ENCODE measurements at regions of chr13 and their contacts with region 1.

Region 1: GRCh38 chr13:106536244-106537034 is 977 bp upstream of the EFNB2 start:
- DNase-seq: peak; percentile 93
- ATAC-seq: peak; percentile 71 to 74

Region 2: GRCh38 chr13:104571161-104571892 is 1965.1 kb before region 1 on chr13:
- intact Hi-C with region 1: loop called (anchors 5 to 10 kb)
- DNase-seq: peak; percentile 56
- ATAC-seq: peak; percentile 72 to 94

Region 3: DNA sequence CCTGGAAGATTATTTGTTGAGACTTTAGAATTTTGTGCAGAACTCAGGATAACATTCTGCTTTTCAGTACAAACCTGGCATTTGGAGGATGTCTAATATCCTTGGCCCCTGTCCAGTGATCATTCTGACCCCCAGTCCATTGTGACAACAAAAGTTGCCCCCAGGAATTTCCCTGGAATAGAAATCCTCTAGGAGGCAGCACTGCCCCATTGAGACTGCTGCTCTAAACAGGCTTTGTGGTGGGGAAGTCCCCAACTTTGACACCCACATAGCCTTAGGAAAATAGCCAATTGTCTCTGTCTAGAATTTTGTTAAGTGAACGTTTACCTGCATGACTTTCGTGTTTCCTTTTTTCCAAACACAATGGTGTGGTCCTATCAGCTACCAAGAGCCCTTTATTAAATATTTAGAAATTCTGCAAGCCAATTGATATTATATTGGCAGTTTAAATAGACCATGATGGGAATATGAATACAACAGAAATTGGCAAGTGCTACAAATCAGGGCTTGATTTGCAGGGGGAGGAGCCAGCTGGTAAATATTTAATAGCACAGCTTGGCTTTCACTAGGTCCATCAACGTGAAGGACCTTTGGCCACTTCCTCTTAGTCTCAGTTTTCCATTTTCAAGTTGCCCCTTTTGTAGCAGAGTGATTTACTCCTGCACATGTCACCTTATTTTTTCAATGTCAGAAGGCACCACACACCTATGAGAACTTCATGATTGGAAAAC is 452.7 kb before region 1 on chr13:
- intact Hi-C with region 1: loop called in 1 of 2 experiments (anchors 10 kb)
- DNase-seq: no peak
- ATAC-seq: peak in 1 of 2 donors; percentile 32

Region 4: GRCh38 chr13:106475852-106476251 is 60.6 kb before region 1 on chr13:
- intact Hi-C with region 1: no loop called
- DNase-seq: no peak
- ATAC-seq: no peak

Region 5: GRCh38 chr13:106566641-106567473 is 30.4 kb after region 1 on chr13:
- intact Hi-C with region 1: no loop called
- DNase-seq: peak; percentile 81
- ATAC-seq: peak; percentile 72 to 78

Region 6: GRCh38 chr13:106619688-106620555 is 83.5 kb after region 1 on chr13:
- intact Hi-C with region 1: loop called in 1 of 2 experiments (anchors 2 kb)
- DNase-seq: peak; percentile 43
- ATAC-seq: peak; percentile 94 to 96

Region 7: DNA sequence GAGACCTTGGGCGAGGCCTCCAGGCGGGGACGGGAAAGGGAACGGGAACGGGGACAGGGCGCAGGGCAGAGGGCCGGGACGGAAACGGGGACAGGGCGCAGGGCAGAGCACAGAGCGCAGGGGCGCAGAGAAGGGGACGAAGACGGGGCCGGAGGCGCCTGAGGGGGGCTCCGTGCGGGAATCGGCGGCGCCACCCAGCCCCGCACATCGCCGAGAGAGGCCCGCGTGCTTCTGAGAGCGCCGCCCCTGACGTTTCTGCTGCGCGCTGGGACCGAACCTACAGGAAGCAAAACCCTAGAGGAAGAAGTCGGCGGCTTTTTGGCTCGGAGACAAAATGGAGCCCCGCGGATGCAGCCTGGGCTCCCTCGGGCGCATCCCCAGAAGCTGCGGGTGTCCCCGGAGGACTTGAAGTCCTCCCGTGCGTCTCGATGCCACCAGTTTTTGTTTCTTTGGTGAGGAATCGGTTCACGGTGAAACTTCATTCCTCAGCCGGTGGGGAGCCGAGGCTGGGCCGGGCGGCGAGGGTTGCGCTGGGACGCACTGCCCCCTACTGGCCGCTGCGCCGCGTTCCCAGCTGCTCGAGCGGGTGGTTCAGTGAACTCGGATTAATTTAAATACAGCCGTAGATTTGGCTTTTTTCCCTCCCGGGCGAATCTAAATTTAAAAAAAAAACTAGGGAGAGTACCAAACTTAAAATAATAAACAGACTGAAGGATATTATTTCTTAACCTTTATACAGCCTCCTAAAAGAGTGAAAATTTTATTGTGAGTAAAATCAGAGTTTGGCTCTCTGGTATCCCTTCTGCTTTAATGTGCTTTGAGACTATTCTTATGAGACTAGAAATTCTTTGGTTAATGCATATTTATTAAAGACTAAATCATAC is 381.5 kb after region 1 on chr13:
- intact Hi-C with region 1: loop called in 1 of 2 experiments (anchors 10 kb)
- DNase-seq: peak; percentile 78
- ATAC-seq: peak; percentile 90 to 93